ENCODE measurements at regions of chr12 and their contacts with region 1.

Region 1: DNA sequence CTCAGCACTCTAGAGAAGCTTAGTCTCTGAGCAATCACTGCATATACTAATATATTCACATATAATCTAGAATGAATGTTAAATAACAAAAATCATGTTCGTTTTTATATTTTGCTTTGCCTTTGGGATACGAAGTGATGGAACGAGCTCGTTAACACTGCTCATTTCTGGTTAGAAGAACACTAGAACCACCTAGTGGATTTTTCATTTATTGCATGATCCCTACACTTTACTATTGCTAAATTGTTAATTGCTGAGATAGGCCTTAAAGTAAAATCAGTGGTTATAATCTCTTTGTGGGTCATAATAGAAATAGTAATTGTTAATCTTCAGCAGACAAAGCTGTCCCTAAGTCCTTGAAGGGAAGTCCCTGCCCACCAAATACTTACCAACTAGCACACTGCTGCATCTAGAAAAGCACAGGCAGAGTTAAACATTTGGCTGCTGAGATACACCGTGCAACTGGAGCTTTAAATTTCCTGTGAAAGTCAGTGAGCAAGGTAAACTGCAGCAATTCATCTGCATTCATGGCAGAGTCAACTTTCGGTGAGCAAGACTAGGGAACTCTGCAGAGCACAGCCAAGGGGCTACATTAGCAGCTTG is 353.7 kb downstream of the APAF1 start:
- DNase-seq: peak in 3 of 14 experiments; percentile 14 to 24 (median 17)
- ATAC-seq: no peak
- H3K4me3 ChIP-seq: no peak overlapping the region
- H3K4me3 Mint-ChIP-seq: no peak overlapping the region
- H3K27ac ChIP-seq: no peak overlapping the region
- H3K27ac Mint-ChIP-seq: no peak overlapping the region
- H3K4me1 ChIP-seq: no peaks in the 10 kb centered on the region
- H3K4me1 Mint-ChIP-seq: no peaks in the 10 kb centered on the region
- H3K27me3 ChIP-seq: no peaks in the 10 kb centered on the region
- H3K27me3 Mint-ChIP-seq: no peaks in the 10 kb centered on the region
- CTCF ChIP-seq: peak; percentile 40

Region 2: GRCh38 chr12:98559666-98560065 is 439.1 kb before region 1 on chr12:
- CTCF ChIA-PET with region 1: no interaction called
- POLR2A ChIA-PET with region 1: no interaction called
- intact Hi-C with region 1: loop called in 1 of 2 experiments (anchors 10 kb)
- DNase-seq: no peak
- ATAC-seq: no peak
- H3K4me3 ChIP-seq: no peak overlapping the region
- H3K4me3 Mint-ChIP-seq: no peak overlapping the region
- H3K27ac ChIP-seq: no peak overlapping the region
- H3K27ac Mint-ChIP-seq: no peak overlapping the region
- H3K4me1 ChIP-seq: no peaks in the 10 kb centered on the region
- H3K4me1 Mint-ChIP-seq: no peaks in the 10 kb centered on the region
- H3K27me3 ChIP-seq: no peaks in the 10 kb centered on the region
- H3K27me3 Mint-ChIP-seq: no peaks in the 10 kb centered on the region
- CTCF ChIP-seq: no peak

Region 3: DNA sequence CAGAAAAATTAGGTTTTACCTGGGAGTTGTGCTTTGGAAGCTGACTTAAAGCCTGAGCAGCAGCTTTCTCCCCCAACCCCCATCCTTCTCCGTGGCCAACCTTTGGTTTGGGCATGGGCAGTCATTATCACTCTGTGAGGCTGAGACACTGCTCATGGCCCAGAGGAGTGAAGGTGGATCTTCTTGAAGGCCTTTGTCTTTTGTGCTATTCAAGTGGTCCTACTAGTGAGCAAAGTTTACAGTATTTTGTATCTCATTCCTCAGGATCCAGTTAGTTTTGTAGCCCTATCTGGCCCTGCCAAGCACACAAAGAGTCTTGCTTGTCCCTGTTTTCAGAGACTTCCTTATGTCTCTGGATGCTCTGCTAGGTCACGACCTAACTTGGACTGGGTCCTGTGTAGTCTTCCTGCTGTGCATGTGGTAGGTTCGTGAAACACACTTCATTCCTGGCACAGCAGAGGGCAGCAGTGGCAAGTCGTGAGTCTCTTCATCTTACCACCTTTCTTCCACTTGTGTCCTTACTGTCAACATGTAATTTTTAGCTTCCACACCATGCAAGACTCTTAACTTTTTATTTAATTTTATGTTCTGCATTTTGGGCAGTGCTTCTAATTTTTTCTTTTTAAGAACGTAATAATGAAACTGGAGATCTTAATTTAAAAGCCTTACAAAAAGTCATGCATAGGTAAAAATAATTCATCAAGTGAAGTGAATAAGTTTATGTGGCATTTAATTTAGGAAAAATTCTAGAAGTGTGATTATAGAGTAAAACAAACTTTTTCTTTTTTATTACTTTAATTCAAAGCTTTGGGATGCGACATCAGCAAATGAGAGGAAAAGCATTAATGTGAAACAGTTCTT is 300.0 kb before region 1 on chr12:
- CTCF ChIA-PET with region 1: no interaction called
- POLR2A ChIA-PET with region 1: no interaction called
- intact Hi-C with region 1: loop called in 1 of 2 experiments (anchors 2 kb)
- DNase-seq: peak in 12 of 14 experiments; percentile 4 to 58 (median 22)
- ATAC-seq: peak; percentile 71
- H3K4me3 ChIP-seq: no peak overlapping the region
- H3K4me3 Mint-ChIP-seq: no peak overlapping the region
- H3K27ac ChIP-seq: no peak overlapping the region
- H3K27ac Mint-ChIP-seq: no peak overlapping the region
- H3K4me1 ChIP-seq: peaks cover 4% of the 10 kb centered on the region
- H3K4me1 Mint-ChIP-seq: peaks cover 5% of the 10 kb centered on the region
- H3K27me3 ChIP-seq: no peaks in the 10 kb centered on the region
- H3K27me3 Mint-ChIP-seq: no peaks in the 10 kb centered on the region
- CTCF ChIP-seq: peak; percentile 49

Region 4: GRCh38 chr12:98725476-98726247 is 273.1 kb before region 1 on chr12:
- CTCF ChIA-PET with region 1: no interaction called
- POLR2A ChIA-PET with region 1: no interaction called
- intact Hi-C with region 1: loop called (anchors 2 to 10 kb)
- DNase-seq: peak in 11 of 14 experiments; percentile 6 to 41 (median 24)
- ATAC-seq: peak; percentile 52
- H3K4me3 ChIP-seq: no peak overlapping the region
- H3K4me3 Mint-ChIP-seq: no peak overlapping the region
- H3K27ac ChIP-seq: no peak overlapping the region
- H3K27ac Mint-ChIP-seq: no peak overlapping the region
- H3K4me1 ChIP-seq: no peaks in the 10 kb centered on the region
- H3K4me1 Mint-ChIP-seq: no peaks in the 10 kb centered on the region
- H3K27me3 ChIP-seq: no peaks in the 10 kb centered on the region
- H3K27me3 Mint-ChIP-seq: no peaks in the 10 kb centered on the region
- CTCF ChIP-seq: peak; percentile 32